Activated naive CD4-positive, alpha-beta T cell treated with anti-CD3 and anti-CD28 coated beads for 36 hours (primary cell): ENCODE measurements at regions of chr6 and their contacts with region 1.

Region 1: GRCh38 chr6:123316733-123317323 is 319.9 kb downstream of the TRDN start:
- DNase-seq: no peak
- H3K4me3 Mint-ChIP-seq: no peak overlapping the region
- H3K27ac Mint-ChIP-seq: no peak overlapping the region
- H3K4me1 Mint-ChIP-seq: no peaks in the 10 kb centered on the region
- H3K27me3 Mint-ChIP-seq: peaks cover 2% of the 10 kb centered on the region

Region 2: DNA sequence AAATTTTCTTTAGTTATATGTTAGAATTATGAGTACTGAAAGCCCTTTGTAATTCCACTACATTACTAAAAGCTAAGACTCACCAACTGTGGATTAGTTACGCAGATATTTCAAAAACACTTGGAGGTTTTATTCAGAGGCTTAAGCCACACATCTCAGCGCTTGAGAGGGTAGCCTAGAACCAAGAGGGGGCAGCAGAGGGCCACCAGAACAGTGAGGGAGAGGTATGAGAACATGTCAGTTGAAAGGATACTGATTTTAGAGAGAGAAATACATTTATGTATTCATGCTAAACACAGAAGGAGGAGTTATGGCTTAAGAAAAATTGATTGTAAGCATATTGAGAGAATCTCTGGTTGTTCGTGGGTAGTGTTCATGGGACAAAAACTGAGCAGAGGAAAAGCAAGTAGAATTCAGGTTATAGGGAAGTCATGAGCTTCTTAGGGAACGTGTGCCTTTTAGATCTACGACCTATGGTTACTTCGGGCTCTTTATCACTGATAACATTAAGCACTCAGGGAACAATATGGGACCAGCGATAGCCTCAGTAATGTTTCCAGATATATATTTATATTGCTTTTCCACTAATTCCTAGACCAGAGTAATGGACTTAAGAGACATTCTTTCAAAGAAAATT is 824.8 kb before region 1 on chr6:
- CTCF ChIA-PET with region 1: no interaction called
- intact Hi-C with region 1: loop called (anchors 5 kb)
- DNase-seq: peak; percentile 87
- H3K4me3 Mint-ChIP-seq: no peak overlapping the region
- H3K27ac Mint-ChIP-seq: no peak overlapping the region
- H3K4me1 Mint-ChIP-seq: peaks cover 10% of the 10 kb centered on the region
- H3K27me3 Mint-ChIP-seq: no peaks in the 10 kb centered on the region

Region 3: DNA sequence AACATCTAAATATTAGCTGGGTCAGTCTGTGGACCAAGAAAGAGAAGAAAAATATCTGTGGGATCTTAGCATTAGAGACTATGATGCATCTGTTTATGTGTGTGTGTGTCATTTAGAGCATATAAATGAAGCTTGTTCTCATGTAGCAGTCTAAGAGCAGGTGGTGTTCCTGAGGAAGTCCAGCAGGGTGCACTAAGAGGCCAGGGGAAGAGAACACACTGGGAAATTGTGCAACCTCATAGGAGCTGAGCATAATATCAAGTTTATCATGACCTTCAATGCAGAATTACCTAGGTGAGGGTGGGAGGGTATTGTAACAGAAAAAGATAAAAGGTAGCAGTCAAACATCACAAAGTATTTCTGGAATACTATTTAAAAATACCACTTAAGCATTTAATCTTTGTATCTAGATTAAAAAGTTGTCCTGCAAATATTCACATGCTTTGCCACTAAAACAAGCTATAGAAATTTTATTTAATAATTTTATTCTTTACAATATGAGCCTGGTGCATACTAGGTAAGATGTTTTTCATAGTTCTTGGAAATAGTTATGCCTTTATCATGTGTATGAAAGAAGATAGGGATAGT is 447.3 kb before region 1 on chr6:
- CTCF ChIA-PET with region 1: no interaction called
- intact Hi-C with region 1: loop called (anchors 1 kb)
- DNase-seq: peak; percentile 13
- H3K4me3 Mint-ChIP-seq: no peak overlapping the region
- H3K27ac Mint-ChIP-seq: no peak overlapping the region
- H3K4me1 Mint-ChIP-seq: no peaks in the 10 kb centered on the region
- H3K27me3 Mint-ChIP-seq: peaks cover 6% of the 10 kb centered on the region

Region 4: DNA sequence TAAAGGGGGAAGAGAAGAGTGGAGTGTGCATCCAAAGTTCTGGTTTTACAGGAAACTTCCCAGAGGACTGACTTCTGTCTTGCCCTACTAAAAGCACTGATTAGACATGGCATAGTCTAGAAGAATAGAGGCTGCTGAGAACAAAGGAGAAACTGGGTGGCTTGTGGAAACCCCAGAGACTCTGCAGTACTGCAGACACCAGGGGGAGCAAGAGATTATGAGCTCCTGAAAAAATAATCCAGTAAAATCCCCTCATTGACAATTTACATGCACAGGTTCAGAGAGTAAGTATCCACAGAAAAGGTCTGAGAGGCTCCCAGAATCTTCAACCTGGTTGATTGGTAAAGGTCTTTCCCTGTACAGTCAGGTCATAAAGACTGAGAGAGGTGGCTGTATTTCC is 369.5 kb before region 1 on chr6:
- CTCF ChIA-PET with region 1: no interaction called
- intact Hi-C with region 1: loop called (anchors 10 kb)
- DNase-seq: no peak
- H3K4me3 Mint-ChIP-seq: no peak overlapping the region
- H3K27ac Mint-ChIP-seq: no peak overlapping the region
- H3K4me1 Mint-ChIP-seq: no peaks in the 10 kb centered on the region
- H3K27me3 Mint-ChIP-seq: no peaks in the 10 kb centered on the region

Region 5: DNA sequence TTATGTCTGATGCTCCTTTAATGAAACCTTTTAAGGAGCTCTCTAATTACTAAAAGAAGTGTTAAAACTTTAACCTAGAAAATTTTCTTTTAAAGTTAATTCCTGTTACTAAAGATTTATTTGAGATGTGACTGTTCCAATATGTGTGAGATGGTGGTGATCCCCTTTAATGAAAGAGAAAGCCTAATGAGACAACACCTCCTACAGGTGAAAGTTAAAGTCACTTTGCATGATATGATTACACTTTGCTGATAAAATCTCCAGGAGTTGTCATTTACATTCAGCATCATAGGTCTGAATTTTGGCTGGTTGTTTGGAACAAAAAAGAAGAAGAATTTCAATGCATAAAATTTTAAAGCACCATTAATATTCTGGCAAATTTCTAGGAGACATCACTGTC is 12.5 kb after region 1 on chr6:
- CTCF ChIA-PET with region 1: no interaction called
- intact Hi-C with region 1: no loop called
- DNase-seq: no peak
- H3K4me3 Mint-ChIP-seq: no peak overlapping the region
- H3K27ac Mint-ChIP-seq: no peak overlapping the region
- H3K4me1 Mint-ChIP-seq: no peaks in the 10 kb centered on the region
- H3K27me3 Mint-ChIP-seq: peaks cover 4% of the 10 kb centered on the region